ENCODE measurements at regions of chr6 and their contacts with region 1.

Region 1: GRCh38 chr6:116279260-116280063 is at the start of gene TSPYL1:
- DNase-seq: peak; percentile 91
- H3K4me3 Mint-ChIP-seq: peak within 1 kb of the TSS; percentile 91
- H3K27ac Mint-ChIP-seq: peak within 1 kb of the TSS; percentile 95
- H3K4me1 Mint-ChIP-seq: peaks cover 52% of the 10 kb centered on the region
- H3K27me3 Mint-ChIP-seq: peaks cover 2% of the 10 kb centered on the region
- total RNA-seq, gene TSPYL1: 41.8 and 43.5 TPM in 2 replicates

Region 2: DNA sequence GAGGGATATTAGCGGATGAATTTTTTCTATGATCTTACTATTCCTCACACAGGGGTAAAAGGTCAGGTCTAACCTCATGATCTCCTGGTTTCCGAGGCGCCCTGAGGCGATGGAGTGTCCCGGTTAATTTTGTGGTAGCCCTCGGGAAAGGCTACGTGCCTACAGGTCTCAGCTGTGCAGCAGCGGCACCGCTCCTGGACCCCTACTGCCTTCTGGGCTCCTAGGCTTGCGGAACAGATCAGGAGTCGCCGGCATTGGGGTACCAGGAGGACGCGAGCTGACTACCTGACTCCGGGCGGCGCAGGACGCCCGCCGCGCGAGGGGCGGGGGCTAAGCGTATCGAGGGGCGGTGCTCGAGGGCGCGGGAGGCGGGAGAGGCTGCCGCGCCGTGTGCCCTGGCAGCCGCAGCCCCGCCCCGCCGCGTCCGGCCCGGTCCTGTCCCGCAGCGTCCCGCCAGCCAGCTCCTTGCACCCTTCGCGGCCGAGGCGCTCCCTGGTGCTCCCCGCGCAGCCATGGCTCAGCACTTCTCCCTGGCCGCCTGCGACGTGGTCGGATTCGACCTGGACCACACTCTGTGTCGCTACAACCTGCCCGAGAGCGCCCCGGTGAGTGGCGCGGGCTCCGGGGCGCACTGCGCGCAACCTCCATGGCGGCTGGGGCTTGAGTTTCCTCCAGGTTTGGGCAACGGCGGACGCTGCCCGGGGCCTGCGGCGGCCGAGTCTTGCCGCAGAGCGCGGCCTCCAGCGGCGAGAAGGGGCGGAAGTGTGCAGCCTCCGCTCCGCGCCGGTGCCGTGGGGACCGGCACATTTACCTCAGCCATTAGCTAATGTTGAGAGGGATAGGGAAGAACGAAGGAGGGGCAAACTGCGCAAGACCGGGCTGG is 178.8 kb before region 1 on chr6 and contains the start of gene NT5DC1:
- intact Hi-C with region 1: loop called (anchors 1 kb)
- DNase-seq: peak; percentile 82
- H3K4me3 Mint-ChIP-seq: peak within 1 kb of the TSS; percentile 95
- H3K27ac Mint-ChIP-seq: peak within 1 kb of the TSS; percentile 87
- H3K4me1 Mint-ChIP-seq: peaks cover 53% of the 10 kb centered on the region
- H3K27me3 Mint-ChIP-seq: no peaks in the 10 kb centered on the region
- total RNA-seq, gene NT5DC1: 30.1 and 37.2 TPM in 2 replicates

Region 3: GRCh38 chr6:116253505-116254296 is 25.8 kb before region 1 on chr6 and contains the start of gene TSPYL4:
- intact Hi-C with region 1: loop called (anchors 1 kb)
- DNase-seq: peak; percentile 88
- H3K4me3 Mint-ChIP-seq: no peak within 1 kb of the TSS
- H3K27ac Mint-ChIP-seq: no peak within 1 kb of the TSS
- H3K4me1 Mint-ChIP-seq: no peaks in the 10 kb centered on the region
- H3K27me3 Mint-ChIP-seq: no peaks in the 10 kb centered on the region
- total RNA-seq, gene TSPYL4: 20.4 and 21.4 TPM in 2 replicates

Region 4: DNA sequence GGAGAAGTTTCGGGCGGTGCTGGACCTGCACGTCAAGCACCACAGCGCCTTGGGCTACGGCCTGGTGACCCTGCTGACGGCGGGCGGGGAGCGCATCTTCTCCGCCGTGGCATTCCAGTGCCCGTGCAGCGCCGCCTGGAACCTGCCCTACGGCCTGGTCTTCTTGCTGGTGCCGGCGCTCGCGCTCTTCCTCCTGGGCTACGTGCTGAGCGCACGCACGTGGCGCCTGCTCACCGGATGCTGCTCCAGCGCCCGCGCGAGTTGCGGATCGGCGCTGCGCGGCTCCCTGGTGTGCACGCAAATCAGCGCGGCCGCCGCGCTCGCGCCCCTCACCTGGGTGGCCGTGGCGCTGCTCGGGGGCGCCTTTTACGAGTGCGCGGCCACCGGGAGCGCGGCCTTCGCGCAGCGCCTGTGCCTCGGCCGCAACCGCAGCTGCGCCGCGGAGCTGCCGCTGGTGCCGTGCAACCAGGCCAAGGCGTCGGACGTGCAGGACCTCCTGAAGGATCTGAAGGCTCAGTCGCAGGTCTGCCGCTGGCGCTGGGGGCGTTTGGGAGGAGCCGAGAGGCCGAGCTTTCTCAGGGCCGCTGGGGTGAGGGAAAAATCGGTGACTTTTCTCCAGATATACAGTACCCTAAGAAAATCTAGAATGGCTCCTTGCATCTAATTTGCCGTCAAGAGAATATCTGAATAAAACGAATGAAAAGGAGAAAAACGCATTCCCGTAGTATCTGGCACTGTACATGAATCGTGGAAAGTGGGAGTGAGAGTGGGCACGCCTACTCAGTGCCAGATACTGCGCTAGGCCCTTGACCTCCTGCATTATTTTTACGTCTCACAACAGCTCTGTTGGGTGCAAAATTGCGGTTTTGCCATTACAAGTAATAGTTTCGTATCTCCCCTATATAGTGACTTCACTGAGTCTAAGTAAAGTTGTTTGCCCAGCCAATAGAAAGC is 182.7 kb after region 1 on chr6:
- intact Hi-C with region 1: loop called (anchors 2 kb)
- DNase-seq: peak; percentile 67
- H3K4me3 Mint-ChIP-seq: peak overlapping the region; percentile 87
- H3K27ac Mint-ChIP-seq: peak overlapping the region; percentile 87
- H3K4me1 Mint-ChIP-seq: peaks cover 89% of the 10 kb centered on the region
- H3K27me3 Mint-ChIP-seq: peaks cover 1% of the 10 kb centered on the region

Region 5: DNA sequence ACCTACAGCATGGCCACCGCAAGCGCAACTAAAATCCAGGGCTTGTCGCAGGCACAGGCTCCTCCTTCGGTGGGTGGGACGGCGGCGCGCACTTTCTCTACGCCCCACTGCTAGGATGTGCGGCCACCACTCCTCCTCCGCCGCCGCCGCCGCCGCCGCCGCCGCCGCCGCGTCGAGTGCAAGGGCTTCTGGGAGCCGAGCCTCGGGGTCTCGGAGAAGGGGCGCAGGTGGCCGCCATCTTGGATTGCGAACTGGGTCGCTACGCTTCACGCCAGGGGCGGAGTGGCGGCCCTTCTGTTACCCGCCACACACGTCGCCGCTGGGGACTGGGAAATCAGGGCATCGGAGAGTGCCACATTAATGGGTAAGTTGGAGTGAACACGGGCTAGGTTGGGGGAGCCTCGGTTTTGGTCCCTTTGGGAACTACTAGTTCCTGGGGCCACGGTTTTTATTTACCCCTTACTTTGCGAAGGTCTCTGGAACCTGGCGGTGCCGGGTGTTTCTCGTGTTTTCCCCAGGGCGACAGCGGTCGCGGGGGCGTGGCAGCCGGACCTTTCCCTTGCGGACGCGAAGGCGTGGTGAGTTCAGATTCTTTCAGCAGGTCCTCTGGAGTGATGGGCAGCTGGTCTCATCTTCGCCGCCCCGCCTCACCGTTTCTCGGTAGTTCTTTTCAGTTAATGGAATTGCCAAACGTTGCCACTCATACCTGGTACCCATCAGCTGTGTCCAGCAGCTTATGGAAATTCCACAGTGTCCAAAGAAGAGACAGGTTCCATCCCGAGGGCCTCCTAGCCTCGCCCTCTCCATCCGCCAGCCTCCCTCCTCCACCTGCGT is 401.7 kb after region 1 on chr6 and contains the start of gene KPNA5:
- intact Hi-C with region 1: loop called (anchors 1 kb)
- DNase-seq: peak; percentile 84
- H3K4me3 Mint-ChIP-seq: peak within 1 kb of the TSS; percentile 97
- H3K27ac Mint-ChIP-seq: peak within 1 kb of the TSS; percentile 97
- H3K4me1 Mint-ChIP-seq: peaks cover 25% of the 10 kb centered on the region
- H3K27me3 Mint-ChIP-seq: no peaks in the 10 kb centered on the region
- total RNA-seq, gene KPNA5: 6.1 and 7.6 TPM in 2 replicates

Measured in activated T-helper 1 cell treated with anti-CD3 and anti-CD28 coated beads, Interleukin-12 subunit alpha, Interleukin-12 subunit beta, Interleukin-2, Interleukin-4 antibody, amounts not matched to agents 30 ng/mL and 10 ng/mL and 1 ng/mL, durations not matched to agents 14 hours and 24 hours and 36 hours (primary cell).